GM23248 (cell line): ENCODE measurements at regions of chrX and their contacts with region 1.

Region 1: GRCh38 chrX:52574416-52575275 is 57.8 kb upstream of the XAGE1B start:
- DNase-seq: peak; percentile 67
- H3K4me3 ChIP-seq: no peak overlapping the region
- H3K27ac ChIP-seq: no peak overlapping the region
- H3K4me1 ChIP-seq: no peaks in the 10 kb centered on the region
- H3K27me3 ChIP-seq: no peaks in the 10 kb centered on the region

Region 2: GRCh38 chrX:52346512-52347194 is 228.0 kb before region 1 on chrX:
- in situ Hi-C with region 1: loop called (anchors 25 kb)
- DNase-seq: peak; percentile 49
- H3K4me3 ChIP-seq: no peak overlapping the region
- H3K27ac ChIP-seq: no peak overlapping the region
- H3K4me1 ChIP-seq: no peaks in the 10 kb centered on the region
- H3K27me3 ChIP-seq: no peaks in the 10 kb centered on the region

Region 3: DNA sequence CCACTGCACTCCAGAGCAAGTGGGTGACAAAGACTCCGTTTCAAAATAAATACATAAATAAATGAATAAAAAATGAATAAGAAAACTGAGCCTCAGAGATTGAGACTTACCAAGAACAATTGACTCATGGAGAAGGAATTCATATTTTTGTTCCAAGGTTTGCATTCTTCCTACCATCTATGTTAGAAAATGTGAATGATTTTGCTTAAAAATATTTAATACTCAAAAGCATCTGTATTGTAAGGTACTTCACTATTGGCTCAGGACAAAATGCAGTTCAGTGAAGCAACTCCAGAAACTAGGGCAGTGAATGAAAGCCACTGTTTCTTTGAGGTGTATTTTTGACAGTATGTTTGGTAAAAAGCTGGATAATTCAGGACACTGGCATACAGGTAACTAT is 151.8 kb before region 1 on chrX:
- in situ Hi-C with region 1: no loop called
- DNase-seq: peak; percentile 69
- H3K4me3 ChIP-seq: no peak overlapping the region
- H3K27ac ChIP-seq: no peak overlapping the region
- H3K4me1 ChIP-seq: peaks cover 32% of the 10 kb centered on the region
- H3K27me3 ChIP-seq: no peaks in the 10 kb centered on the region

Region 4: GRCh38 chrX:52852110-52852865 is 277.6 kb after region 1 on chrX:
- in situ Hi-C with region 1: loop called (anchors 25 kb)
- DNase-seq: peak; percentile 33
- H3K4me3 ChIP-seq: no peak overlapping the region
- H3K27ac ChIP-seq: peak overlapping the region; percentile 18; the same call in 1 of the 2 replicates
- H3K4me1 ChIP-seq: peaks cover 16% of the 10 kb centered on the region
- H3K27me3 ChIP-seq: no peaks in the 10 kb centered on the region